Heart left ventricle (tissue), 16 donors: ENCODE measurements at regions of chr10 and their contacts with region 1.

Region 1: GRCh38 chr10:34815185-34816084 is at the start of gene PARD3:
- DNase-seq: peak; percentile 71 to 83 (median 73)
- ATAC-seq: peak; percentile 43 to 85 (median 81)
- H3K4me3 ChIP-seq: peak within 1 kb of the TSS; percentile 67 to 98 (median 84)
- H3K27ac ChIP-seq: peak within 1 kb of the TSS; percentile 78 to 96 (median 82)
- H3K4me1 ChIP-seq: peaks cover 0 to 56% (median 24%) of the 10 kb centered on the region in 12 donors
- H3K27me3 ChIP-seq: peaks cover 0 to 37% (median 0%) of the 10 kb centered on the region in 9 donors
- CTCF ChIP-seq: no peak
- POLR2A ChIP-seq: no peak
- total RNA-seq, gene PARD3: 27.9 to 69.7 (median 33.1) TPM

Region 2: DNA sequence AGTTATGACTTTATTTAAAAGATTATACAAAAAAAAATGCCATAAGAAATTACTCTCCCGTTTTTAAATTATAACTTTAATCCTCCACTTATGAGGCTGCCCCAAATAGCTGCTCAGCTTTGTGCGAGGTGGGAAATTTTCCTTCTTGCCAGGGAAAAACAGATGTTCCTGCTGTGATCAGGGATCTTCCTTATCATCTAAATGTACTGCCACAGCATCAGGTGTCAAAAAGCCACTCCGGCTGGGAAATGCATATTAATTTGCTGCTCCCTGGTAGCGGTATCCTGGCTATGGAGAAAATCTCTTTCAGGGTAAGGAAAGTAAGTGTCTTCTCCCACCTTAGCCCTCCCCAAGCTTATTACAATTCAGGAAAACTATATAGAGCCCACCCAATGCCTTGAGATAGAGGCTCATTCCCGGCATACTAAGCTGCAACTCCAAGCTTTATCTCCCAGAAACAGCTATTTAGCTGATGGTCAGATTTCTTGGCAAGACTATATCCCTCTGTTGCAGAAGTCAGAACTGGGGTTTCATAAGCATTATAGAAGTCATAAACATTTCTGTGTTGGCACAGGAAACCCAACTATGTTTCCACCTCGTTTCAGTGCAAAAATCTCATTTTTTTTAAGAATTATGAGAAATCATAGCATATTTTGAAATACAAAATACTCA is 360.7 kb before region 1 on chr10:
- intact Hi-C with region 1: no loop called
- DNase-seq: no peak
- ATAC-seq: no peak
- H3K4me3 ChIP-seq: no peak overlapping the region
- H3K27ac ChIP-seq: no peak overlapping the region
- H3K4me1 ChIP-seq: peaks cover 0 to 8% (median 0%) of the 10 kb centered on the region in 12 donors
- H3K27me3 ChIP-seq: no peaks in the 10 kb centered on the region
- CTCF ChIP-seq: no peak
- POLR2A ChIP-seq: no peak

Region 3: GRCh38 chr10:34655286-34656170 is 159.9 kb before region 1 on chr10:
- intact Hi-C with region 1: loop called in 4 of 10 experiments (anchors 5 to 10 kb)
- DNase-seq: no peak
- ATAC-seq: peak in 1 of 4 donors; percentile 17
- H3K4me3 ChIP-seq: no peak overlapping the region
- H3K27ac ChIP-seq: no peak overlapping the region
- H3K4me1 ChIP-seq: peaks cover 0 to 24% (median 12%) of the 10 kb centered on the region in 12 donors
- H3K27me3 ChIP-seq: no peaks in the 10 kb centered on the region
- CTCF ChIP-seq: peak; percentile 56 to 78 (median 70)
- POLR2A ChIP-seq: no peak

Region 4: DNA sequence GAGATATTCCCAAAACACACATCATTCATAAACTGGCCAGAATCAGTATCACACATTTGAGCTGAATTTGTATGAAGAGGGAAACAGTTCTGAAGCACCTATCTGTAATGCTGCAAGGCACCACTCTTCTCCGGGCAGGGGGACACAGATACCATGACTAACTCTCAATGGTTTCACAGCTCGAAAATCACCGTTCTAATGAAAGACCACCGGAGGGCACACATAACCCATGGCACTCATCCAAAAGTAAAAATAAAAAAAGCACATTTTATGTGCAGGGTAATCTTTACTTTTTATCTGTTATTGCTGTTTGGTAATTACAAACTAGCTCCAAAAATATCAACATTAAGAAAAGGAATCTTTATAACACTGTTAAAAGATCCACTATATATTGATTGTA is 137.8 kb before region 1 on chr10:
- intact Hi-C with region 1: loop called in 3 of 10 experiments (anchors 10 kb)
- DNase-seq: no peak
- ATAC-seq: no peak
- H3K4me3 ChIP-seq: no peak overlapping the region
- H3K27ac ChIP-seq: no peak overlapping the region
- H3K4me1 ChIP-seq: peaks cover 0 to 23% (median 8%) of the 10 kb centered on the region in 12 donors
- H3K27me3 ChIP-seq: no peaks in the 10 kb centered on the region
- CTCF ChIP-seq: peak in 1 of 12 donors; percentile 6
- POLR2A ChIP-seq: no peak

Region 5: DNA sequence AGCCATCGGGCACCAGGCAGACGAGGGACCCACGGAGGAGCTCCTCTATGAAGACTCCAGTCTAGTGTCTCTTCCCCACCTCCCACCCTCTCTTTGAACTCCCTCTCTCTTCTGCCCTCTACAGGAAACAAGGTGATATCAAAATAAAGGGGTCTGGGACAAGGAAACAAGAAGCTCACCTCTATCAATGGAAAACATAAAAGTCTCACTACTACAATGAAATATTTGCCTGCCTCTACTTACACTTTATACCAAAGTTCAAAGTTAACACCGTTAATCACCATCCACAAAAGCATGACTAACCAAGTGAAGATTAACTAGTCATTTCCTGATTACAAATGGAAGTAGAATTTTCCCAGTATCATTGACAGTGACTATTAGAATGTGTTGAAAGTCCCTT is 82.5 kb before region 1 on chr10:
- intact Hi-C with region 1: loop called in 8 of 10 experiments (anchors 5 to 10 kb)
- DNase-seq: no peak
- ATAC-seq: no peak
- H3K4me3 ChIP-seq: no peak overlapping the region
- H3K27ac ChIP-seq: no peak overlapping the region
- H3K4me1 ChIP-seq: peaks cover 0 to 17% (median 6%) of the 10 kb centered on the region in 12 donors
- H3K27me3 ChIP-seq: no peaks in the 10 kb centered on the region
- CTCF ChIP-seq: no peak
- POLR2A ChIP-seq: no peak

Region 6: DNA sequence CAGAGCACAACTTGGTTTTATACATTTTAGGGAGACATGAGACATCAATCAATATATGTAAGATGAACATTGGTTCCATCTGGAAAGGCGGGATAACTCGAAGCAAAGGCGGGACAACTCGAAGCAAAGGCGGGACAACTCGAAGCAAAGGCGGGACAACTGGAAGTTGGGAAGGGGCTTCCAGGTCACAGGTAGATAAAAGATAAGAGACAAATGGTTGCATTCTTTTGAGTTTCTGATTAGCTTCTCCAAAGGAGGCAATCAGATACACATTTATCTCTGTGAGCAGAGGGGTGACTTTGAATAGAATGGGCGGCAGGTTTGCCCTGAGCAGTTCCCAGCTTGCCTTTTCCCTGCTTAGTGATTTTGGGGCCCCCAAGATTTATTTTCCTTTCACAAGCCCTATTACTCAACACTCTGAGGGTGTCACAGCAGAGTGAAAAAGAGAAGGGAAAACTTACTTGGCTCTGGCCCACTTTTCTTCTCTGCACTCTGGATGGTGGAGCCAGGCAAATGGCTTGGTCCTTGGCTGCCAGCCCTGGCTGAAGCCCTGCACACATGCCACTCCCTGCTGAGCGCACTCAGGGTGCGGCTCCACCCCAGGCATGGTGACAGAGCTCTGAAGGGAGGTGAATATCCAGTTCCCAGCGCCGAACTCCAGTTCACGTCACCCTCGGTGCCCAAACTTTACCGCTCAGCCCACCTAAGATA is 47.0 kb before region 1 on chr10:
- intact Hi-C with region 1: loop called in 2 of 10 experiments (anchors 5 kb)
- DNase-seq: peak; percentile 72 to 88 (median 83)
- ATAC-seq: peak; percentile 94 to 98 (median 98)
- H3K4me3 ChIP-seq: peak overlapping the region in 3 of 12 donors; percentile 18 to 34 (median 26)
- H3K27ac ChIP-seq: peak overlapping the region in 4 of 12 donors; percentile 1 to 65 (median 42)
- H3K4me1 ChIP-seq: peaks cover 0 to 46% (median 17%) of the 10 kb centered on the region in 12 donors
- H3K27me3 ChIP-seq: no peaks in the 10 kb centered on the region
- CTCF ChIP-seq: no peak
- POLR2A ChIP-seq: no peak

Region 7: GRCh38 chr10:34801097-34801733 is 14.2 kb before region 1 on chr10:
- intact Hi-C with region 1: no loop called
- DNase-seq: peak in 2 of 5 donors; percentile 45 to 51
- ATAC-seq: peak in 1 of 4 donors; percentile 75
- H3K4me3 ChIP-seq: peak overlapping the region in 1 of 12 donors; percentile 15
- H3K27ac ChIP-seq: no peak overlapping the region
- H3K4me1 ChIP-seq: peaks cover 0 to 25% (median 9%) of the 10 kb centered on the region in 12 donors
- H3K27me3 ChIP-seq: no peaks in the 10 kb centered on the region
- CTCF ChIP-seq: no peak
- POLR2A ChIP-seq: no peak